Psoas muscle (tissue), 8 donors: ENCODE measurements at regions of chr1 and their contacts with region 1.

Region 1: GRCh38 chr1:3556336-3556735 is 55.0 kb downstream of the MEGF6 start:
- DNase-seq: no peak
- ATAC-seq: no peak
- H3K4me3 ChIP-seq: no peak overlapping the region
- H3K27ac ChIP-seq: no peak overlapping the region
- H3K4me1 ChIP-seq: no peaks in the 10 kb centered on the region
- H3K27me3 ChIP-seq: peaks cover 0 to 46% (median 15%) of the 10 kb centered on the region in 3 donors
- CTCF ChIP-seq: no peak

Region 2: GRCh38 chr1:3581296-3582036 is 25.1 kb after region 1 on chr1:
- intact Hi-C with region 1: loop called in 1 of 2 experiments (anchors 1 kb)
- DNase-seq: no peak
- ATAC-seq: no peak
- H3K4me3 ChIP-seq: no peak overlapping the region
- H3K27ac ChIP-seq: no peak overlapping the region
- H3K4me1 ChIP-seq: no peaks in the 10 kb centered on the region
- H3K27me3 ChIP-seq: peaks cover 0 to 31% (median 2%) of the 10 kb centered on the region in 3 donors
- CTCF ChIP-seq: no peak